Activated CD4-positive, alpha-beta memory T cell treated with anti-CD3 and anti-CD28 coated beads, Interleukin-2, amount 10 ng/mL, durations not matched to agents 7 days and 5 days (primary cell): ENCODE measurements at regions of chr14 and their contacts with region 1.

Region 1: GRCh38 chr14:73713803-73714655 is at the start of gene PNMA1:
- DNase-seq: peak; percentile 88
- H3K4me3 Mint-ChIP-seq: peak within 1 kb of the TSS; percentile 91
- H3K27ac Mint-ChIP-seq: peak within 1 kb of the TSS; percentile 88
- H3K4me1 Mint-ChIP-seq: peaks cover 22% of the 10 kb centered on the region
- H3K27me3 Mint-ChIP-seq: no peaks in the 10 kb centered on the region
- total RNA-seq, gene PNMA1: 28.2 to 30.0 TPM

Region 2: DNA sequence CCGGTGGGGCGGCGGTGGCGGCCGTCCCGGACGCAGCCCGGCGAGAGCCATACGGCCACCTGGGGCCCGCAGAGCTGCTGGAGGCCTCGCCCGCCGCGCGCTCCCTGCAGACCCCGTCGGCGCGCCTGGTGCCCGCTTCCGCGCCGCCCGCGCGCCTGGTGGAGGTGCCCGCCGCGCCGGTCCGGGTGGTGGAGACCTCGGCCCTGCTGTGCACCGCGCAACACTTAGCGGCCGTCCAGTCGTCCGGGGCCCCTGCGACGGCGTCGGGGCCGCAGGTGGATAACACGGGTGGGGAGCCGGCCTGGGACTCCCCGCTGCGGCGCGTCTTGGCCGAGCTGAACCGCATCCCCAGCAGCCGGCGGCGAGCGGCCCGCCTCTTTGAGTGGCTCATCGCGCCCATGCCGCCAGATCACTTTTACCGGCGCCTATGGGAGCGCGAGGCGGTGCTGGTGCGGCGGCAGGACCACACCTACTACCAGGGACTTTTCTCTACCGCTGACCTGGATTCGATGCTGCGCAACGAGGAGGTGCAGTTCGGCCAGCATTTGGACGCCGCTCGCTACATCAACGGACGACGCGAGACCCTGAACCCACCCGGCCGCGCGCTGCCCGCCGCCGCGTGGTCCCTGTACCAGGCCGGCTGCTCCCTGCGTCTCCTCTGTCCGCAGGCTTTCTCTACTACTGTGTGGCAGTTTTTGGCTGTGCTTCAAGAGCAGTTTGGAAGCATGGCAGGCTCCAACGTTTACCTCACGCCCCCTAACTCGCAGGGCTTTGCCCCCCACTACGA is 222.6 kb before region 1 on chr14:
- CTCF ChIA-PET with region 1: no interaction called
- POLR2A ChIA-PET with region 1: interaction called, 11 read pairs
- DNase-seq: peak; percentile 79
- H3K4me3 Mint-ChIP-seq: peak overlapping the region; percentile 81
- H3K27ac Mint-ChIP-seq: peak overlapping the region; percentile 74
- H3K4me1 Mint-ChIP-seq: peaks cover 45% of the 10 kb centered on the region
- H3K27me3 Mint-ChIP-seq: peaks cover 12% of the 10 kb centered on the region

Region 3: DNA sequence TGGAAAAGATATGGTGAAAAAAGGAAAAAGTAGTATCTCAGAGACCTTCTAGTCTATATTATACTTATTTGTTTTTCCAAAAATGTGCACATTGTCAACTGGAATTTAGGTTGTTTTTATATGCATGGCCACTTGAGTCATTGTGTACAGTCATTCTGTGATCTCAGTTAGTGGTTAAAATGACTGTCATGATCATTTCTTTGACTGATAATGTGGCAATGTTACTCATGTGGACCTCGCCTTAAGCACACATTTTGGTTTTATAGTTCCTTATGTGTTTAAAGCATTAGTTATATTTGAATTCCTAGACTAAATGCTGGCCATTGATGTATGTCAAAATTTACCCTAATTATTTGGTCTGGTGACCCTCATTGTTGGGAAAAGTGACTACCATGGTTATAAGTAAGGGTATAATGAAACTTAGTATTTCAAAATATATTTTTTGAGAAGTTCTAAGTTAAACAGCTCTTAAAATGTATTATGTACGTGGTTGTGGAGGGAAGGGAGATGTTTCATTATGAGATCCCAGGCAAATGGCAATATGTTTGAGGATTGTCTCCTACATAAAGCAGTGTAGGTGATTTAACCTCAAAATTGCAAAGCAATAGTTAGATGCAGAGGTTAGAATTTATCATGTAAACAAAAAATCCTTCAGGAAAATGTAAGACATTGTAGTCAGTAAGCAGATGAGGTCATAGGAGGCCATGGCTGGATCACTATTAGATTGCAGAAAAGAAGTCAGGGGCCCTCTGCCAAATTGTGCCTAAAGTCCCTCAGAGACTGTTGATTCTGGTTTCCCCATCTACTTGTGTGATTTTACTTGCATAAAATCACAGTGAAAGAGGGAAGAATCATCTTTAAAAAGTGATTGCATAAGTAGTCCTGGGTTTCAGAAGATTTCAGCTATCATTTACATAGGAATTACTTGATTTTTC is 17.3 kb before region 1 on chr14:
- CTCF ChIA-PET with region 1: no interaction called
- POLR2A ChIA-PET with region 1: interaction called, 17 read pairs
- DNase-seq: no peak
- H3K4me3 Mint-ChIP-seq: no peak overlapping the region
- H3K27ac Mint-ChIP-seq: peak overlapping the region; percentile 69
- H3K4me1 Mint-ChIP-seq: peaks cover 37% of the 10 kb centered on the region
- H3K27me3 Mint-ChIP-seq: no peaks in the 10 kb centered on the region

Region 4: DNA sequence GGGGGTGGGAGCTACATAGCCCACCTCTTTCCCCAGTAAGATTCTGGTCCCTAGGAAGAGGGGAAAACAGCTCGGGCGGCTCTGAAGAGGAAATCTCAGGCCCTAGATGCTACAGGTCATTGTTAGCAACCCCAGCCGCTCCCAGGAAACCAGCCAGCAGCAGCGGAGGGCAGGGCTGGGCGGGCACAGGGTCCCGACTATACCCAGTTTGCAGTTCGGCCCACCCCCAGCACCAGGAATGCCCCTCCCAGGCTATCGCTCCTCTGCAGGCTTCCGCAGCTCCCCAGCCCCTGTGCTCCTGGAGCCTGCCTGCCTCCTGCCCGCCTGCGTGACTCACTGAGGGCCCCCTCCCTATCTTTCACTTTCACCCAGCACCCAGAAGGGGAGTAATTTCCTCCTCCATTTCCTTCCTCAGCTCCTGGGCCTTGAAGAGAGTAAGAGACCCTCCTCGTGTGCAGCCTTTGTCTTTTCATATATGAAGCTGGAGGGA is 27.4 kb after region 1 on chr14:
- CTCF ChIA-PET with region 1: no interaction called
- POLR2A ChIA-PET with region 1: interaction called, 25 read pairs
- DNase-seq: peak; percentile 75
- H3K4me3 Mint-ChIP-seq: peak overlapping the region; percentile 76
- H3K27ac Mint-ChIP-seq: peak overlapping the region; percentile 98
- H3K4me1 Mint-ChIP-seq: peaks cover 74% of the 10 kb centered on the region
- H3K27me3 Mint-ChIP-seq: no peaks in the 10 kb centered on the region

Region 5: DNA sequence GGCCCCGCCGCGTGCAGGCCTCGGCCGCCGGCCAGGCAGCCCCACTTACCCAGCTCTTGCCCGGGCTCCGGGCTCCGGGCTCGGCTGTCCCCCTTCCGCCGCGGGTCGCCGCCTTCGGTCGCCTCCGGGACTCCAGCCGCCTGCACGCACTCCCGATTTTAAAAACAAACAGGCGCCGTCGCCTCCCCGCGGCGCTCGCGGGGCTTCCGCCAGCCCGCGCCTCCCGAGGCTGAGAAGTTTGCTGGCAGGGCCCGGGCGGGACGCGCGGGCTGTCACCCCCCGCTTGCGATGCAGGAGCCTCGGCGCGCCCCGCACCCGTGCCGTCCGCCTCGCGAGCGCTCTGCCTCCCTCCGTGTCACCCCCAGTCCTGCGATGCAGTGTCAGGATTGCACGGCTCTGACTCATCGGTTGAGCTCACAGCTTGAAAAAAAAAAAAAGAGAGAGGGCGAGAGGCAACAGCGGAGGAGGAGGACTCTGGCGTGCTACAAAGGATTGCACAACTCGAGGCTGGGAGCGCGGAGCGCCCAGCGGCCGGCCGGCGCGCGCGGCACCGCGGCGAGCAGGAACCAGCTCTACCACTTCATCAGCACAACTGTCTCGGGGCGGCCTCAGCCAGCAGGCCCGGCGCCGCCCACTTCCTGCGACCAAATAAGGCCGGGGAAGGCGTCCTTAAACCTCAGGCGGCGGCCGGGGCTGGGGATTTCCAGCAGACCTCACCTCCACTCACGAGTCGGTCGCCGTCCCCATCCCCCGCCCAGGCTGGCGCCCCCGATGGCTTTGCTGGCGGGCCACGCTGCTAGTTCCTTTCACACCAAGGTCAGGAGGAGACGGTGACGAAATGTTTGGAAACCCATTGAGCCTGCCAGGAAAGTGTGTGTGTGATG is 45.9 kb after region 1 on chr14:
- CTCF ChIA-PET with region 1: interaction called, 7 read pairs
- POLR2A ChIA-PET with region 1: interaction called, 20 read pairs
- DNase-seq: peak; percentile 96
- H3K4me3 Mint-ChIP-seq: peak overlapping the region; percentile 87
- H3K27ac Mint-ChIP-seq: peak overlapping the region; percentile 92
- H3K4me1 Mint-ChIP-seq: peaks cover 79% of the 10 kb centered on the region
- H3K27me3 Mint-ChIP-seq: no peaks in the 10 kb centered on the region